ENCODE measurements at regions of chr2 and their contacts with region 1.

Region 1: DNA sequence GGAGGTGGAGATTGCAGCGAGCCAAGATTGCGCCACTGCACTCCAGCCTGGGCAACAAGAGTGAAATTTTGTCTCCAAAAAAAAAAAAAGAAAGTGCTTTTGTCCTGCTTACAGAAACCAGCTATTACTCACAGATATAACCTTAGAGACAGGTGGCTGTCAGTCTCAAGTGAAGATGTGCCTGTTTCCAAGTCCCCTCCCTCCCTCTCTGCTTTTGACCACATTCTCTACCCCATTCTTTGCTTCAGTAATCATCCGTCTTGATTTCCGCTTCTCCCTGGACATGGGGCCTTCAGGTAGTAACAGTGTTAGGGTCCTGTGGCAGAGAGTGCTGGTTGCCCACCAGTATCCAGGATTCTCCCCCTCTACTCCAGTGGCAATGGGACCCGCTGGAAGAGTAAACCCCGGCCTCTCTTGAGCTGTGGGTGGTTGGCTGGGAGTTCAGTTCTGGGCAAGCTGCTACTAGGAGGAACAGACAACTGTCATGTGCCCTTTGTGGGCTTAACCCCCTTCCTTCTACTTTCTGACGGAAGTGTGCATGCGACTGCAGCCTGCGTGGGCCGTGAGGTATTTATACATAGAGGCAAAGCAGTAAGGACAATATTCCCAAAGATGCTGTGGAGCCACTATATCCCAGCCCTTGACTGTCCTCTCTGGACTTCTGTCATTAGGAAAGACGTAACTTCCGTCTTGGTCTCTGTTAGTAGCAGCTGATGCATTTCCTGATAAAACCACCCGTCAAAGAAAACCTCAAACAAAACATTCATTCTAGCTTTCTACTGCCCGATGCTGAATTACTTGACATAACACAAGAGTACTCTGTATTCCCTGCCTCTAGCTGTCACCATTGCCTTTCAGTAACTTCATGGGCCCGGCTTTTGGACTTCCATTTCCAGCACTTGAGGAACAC is 17.8 kb downstream of the PDCL3 start:
- DNase-seq: peak; percentile 63 to 86
- ATAC-seq: peak; percentile 72 to 93 (median 86)
- H3K4me3 ChIP-seq: peak overlapping the region; percentile 27
- H3K4me3 Mint-ChIP-seq: peak overlapping the region; percentile 92
- H3K27ac ChIP-seq: peak overlapping the region; percentile 93
- H3K27ac Mint-ChIP-seq: peak overlapping the region; percentile 99 to 100
- H3K4me1 ChIP-seq: peaks cover 29% of the 10 kb centered on the region
- H3K4me1 Mint-ChIP-seq: peaks cover 36 to 40% of the 10 kb centered on the region in 2 donors
- H3K27me3 ChIP-seq: no peaks in the 10 kb centered on the region
- H3K27me3 Mint-ChIP-seq: no peaks in the 10 kb centered on the region
- CTCF ChIP-seq: no peak

Region 2: DNA sequence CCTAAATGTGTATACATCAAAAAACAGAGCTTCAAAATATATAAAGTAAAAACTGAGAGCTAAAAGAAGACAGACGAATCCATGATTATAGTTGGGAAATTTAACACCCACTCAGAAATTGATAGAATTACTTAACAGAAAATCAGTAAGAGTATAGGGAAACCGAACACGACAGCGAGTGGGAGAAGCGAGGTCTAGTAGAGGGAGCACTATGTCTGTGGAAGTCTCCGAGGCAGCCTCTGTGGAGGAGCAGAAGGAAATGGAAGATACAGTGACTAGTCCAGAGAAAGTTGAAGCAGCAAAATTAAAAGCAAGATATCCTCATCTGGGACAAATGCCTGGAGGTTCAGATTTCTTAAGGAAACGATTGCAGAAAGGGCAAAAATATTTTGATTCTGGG is 71.6 kb before region 1 on chr2:
- intact Hi-C with region 1: no loop called
- DNase-seq: no peak
- ATAC-seq: no peak
- H3K4me3 ChIP-seq: no peak overlapping the region
- H3K4me3 Mint-ChIP-seq: no peak overlapping the region
- H3K27ac ChIP-seq: no peak overlapping the region
- H3K27ac Mint-ChIP-seq: no peak overlapping the region
- H3K4me1 ChIP-seq: no peaks in the 10 kb centered on the region
- H3K4me1 Mint-ChIP-seq: no peaks in the 10 kb centered on the region
- H3K27me3 ChIP-seq: no peaks in the 10 kb centered on the region
- H3K27me3 Mint-ChIP-seq: peaks cover 14 to 18% of the 10 kb centered on the region in 2 donors
- CTCF ChIP-seq: no peak

Region 3: GRCh38 chr2:100562732-100563720 is 17.6 kb before region 1 on chr2 and contains the start of gene PDCL3:
- intact Hi-C with region 1: loop called (anchors 1 kb)
- DNase-seq: peak; percentile 94 to 97
- ATAC-seq: peak; percentile 88 to 96 (median 91)
- H3K4me3 ChIP-seq: peak within 1 kb of the TSS; percentile 93
- H3K4me3 Mint-ChIP-seq: peak within 1 kb of the TSS; percentile 99
- H3K27ac ChIP-seq: peak within 1 kb of the TSS; percentile 92
- H3K27ac Mint-ChIP-seq: peak within 1 kb of the TSS; percentile 97 to 98
- H3K4me1 ChIP-seq: peaks cover 18% of the 10 kb centered on the region
- H3K4me1 Mint-ChIP-seq: peaks cover 5 to 21% of the 10 kb centered on the region in 2 donors
- H3K27me3 ChIP-seq: no peaks in the 10 kb centered on the region
- H3K27me3 Mint-ChIP-seq: no peaks in the 10 kb centered on the region
- CTCF ChIP-seq: no peak
- total RNA-seq, gene PDCL3: 22.3 to 27.3 (median 24.8) TPM

Region 4: GRCh38 chr2:101308432-101309210 is 728.0 kb after region 1 on chr2 and contains the start of gene RNF149:
- intact Hi-C with region 1: loop called (anchors 10 kb)
- DNase-seq: peak; percentile 94 to 95
- ATAC-seq: peak; percentile 72 to 88 (median 83)
- H3K4me3 ChIP-seq: peak within 1 kb of the TSS; percentile 73
- H3K4me3 Mint-ChIP-seq: peak within 1 kb of the TSS; percentile 99
- H3K27ac ChIP-seq: peak within 1 kb of the TSS; percentile 87
- H3K27ac Mint-ChIP-seq: peak within 1 kb of the TSS; percentile 96 to 98
- H3K4me1 ChIP-seq: peaks cover 56% of the 10 kb centered on the region
- H3K4me1 Mint-ChIP-seq: peaks cover 77 to 80% of the 10 kb centered on the region in 2 donors
- H3K27me3 ChIP-seq: no peaks in the 10 kb centered on the region
- H3K27me3 Mint-ChIP-seq: no peaks in the 10 kb centered on the region
- CTCF ChIP-seq: no peak
- total RNA-seq, gene RNF149: 133 to 151 (median 149) TPM